Tibial artery (tissue), 4 donors: ENCODE measurements at regions of chr17 and their contacts with region 1.

Region 1: GRCh38 chr17:17032131-17032692 is 10.0 kb upstream of the MPRIP start:
- DNase-seq: peak; percentile 50 to 88
- H3K4me3 ChIP-seq: no peak overlapping the region
- H3K27ac ChIP-seq: peak overlapping the region; percentile 61 to 64
- H3K4me1 ChIP-seq: peaks cover 0 to 46% (median 43%) of the 10 kb centered on the region in 4 donors
- H3K27me3 ChIP-seq: no peaks in the 10 kb centered on the region
- CTCF ChIP-seq: no peak

Region 2: DNA sequence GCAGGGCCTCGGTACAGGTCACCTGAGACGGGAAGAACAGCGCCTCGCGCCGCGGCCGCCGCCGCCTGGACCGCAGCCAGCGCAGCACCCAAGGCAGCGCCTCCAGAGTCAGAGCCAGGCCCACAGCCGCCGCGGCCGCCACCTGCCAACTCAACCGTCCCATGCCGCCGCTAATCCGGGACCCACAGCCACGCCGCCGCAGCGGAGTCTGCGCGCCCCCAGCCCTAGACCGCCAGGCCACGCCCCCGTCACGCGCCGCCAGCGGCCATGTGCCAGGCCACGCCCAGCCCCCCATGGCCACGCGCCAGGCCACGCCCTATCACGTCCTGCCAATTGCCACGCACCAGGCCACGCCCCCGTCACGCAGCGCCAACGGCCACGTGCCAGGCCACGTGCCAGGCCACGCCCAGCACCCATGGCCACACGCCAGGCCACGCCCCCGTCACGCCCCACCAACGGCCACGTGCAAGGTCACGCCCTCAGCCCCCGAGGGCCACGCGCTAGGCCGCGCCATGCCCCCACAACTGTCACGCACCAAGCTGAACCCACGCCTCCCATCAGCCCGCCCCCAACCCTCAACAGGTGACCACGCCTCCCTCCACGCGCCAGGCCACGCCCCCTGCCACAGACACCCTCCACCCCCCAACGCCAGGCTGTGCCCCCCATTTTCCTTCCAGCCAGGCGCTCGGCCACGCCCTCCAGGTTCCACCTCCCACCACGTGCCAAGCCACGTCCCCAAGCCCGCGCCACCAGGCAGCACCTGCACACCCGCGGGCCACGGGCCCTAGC is 174.1 kb after region 1 on chr17 and contains the start of gene PLD6:
- intact Hi-C with region 1: loop called (anchors 10 kb)
- DNase-seq: peak; percentile 59 to 89
- H3K4me3 ChIP-seq: peak within 1 kb of the TSS; percentile 47 to 62
- H3K27ac ChIP-seq: peak within 1 kb of the TSS; percentile 75 to 84
- H3K4me1 ChIP-seq: peaks cover 6 to 44% (median 39%) of the 10 kb centered on the region in 4 donors
- H3K27me3 ChIP-seq: no peaks in the 10 kb centered on the region
- CTCF ChIP-seq: no peak